Head of caudate nucleus (tissue), 42 donors: ENCODE measurements at regions of chr2 and their contacts with region 1.

Region 1: DNA sequence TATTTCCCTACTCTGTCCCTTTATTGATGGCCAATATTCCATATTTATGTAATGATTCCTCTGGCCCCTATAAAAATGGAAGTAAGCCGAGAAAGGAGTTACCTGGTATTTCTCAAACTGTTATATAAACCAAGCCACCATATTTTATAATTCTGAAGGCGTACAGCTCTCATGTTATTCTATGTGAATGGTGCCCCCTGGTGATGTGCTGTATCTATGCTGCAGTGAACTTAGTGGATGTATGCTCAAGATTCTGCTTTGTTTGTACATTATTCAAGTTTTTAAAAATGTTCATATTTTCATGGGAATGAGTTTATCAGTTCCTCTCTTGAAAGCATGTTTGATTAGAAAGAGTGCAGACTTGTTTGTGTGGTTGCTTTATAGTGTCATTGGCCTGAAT is 194.5 kb upstream of the LRRTM1 start:
- DNase-seq: peak in 41 of 42 donors; percentile 21 to 90 (median 73)

Region 2: DNA sequence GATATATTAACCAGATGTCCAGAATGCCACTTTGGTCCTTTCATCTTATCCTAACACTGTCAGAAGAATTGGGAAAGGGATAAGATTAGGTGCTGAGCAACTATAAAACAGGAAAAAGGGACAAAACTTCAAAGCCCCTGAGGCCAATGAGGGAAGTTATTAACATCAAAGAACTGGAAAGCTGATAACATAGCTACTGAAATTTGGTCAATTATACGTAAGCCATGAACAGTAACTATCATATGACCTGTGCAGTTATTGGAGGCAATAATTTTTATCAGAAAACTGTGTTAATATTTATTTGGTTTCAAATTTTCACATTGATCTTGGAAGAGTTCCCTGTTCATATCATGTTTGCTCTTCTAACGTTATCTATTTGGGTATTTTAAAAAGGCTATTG is 1337.0 kb before region 1 on chr2:
- intact Hi-C with region 1: no loop called
- DNase-seq: no peak

Region 3: GRCh38 chr2:80326214-80326613 is 172.9 kb before region 1 on chr2:
- intact Hi-C with region 1: loop called (anchors 5 kb)
- DNase-seq: peak in 34 of 42 donors; percentile 15 to 86 (median 58)

Region 4: DNA sequence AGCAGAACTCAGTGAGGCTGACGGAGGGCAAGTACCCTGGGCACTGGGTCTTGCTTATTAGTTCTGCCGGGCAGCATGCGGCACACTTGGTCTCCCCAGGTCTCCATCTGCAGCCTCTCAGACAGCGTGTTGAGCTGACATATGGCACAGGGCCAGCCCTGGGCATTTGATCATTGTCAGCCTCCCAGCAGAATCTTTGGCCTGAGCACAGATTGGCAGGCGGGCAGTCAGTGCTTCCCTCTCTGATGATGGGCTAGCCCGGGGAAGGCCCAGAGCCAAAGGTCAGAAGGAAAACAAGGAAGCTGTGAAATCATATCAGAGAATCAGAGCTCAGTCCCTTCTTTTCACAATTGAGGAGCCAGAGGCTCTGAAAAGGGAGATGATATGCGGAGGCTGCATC is 44.5 kb before region 1 on chr2:
- intact Hi-C with region 1: loop called (anchors 10 kb)
- DNase-seq: peak; percentile 56 to 95 (median 88)